ENCODE measurements at regions of chr2 and their contacts with region 1.

Region 1: GRCh38 chr2:216687646-216688045 is 7.7 kb downstream of the IGFBP5 start:
- DNase-seq: no peak
- H3K4me3 ChIP-seq: no peak overlapping the region
- H3K27ac ChIP-seq: no peak overlapping the region
- H3K4me1 ChIP-seq: peaks cover 12% of the 10 kb centered on the region
- H3K27me3 ChIP-seq: no peaks in the 10 kb centered on the region
- CTCF ChIP-seq: peak; percentile 65

Region 2: DNA sequence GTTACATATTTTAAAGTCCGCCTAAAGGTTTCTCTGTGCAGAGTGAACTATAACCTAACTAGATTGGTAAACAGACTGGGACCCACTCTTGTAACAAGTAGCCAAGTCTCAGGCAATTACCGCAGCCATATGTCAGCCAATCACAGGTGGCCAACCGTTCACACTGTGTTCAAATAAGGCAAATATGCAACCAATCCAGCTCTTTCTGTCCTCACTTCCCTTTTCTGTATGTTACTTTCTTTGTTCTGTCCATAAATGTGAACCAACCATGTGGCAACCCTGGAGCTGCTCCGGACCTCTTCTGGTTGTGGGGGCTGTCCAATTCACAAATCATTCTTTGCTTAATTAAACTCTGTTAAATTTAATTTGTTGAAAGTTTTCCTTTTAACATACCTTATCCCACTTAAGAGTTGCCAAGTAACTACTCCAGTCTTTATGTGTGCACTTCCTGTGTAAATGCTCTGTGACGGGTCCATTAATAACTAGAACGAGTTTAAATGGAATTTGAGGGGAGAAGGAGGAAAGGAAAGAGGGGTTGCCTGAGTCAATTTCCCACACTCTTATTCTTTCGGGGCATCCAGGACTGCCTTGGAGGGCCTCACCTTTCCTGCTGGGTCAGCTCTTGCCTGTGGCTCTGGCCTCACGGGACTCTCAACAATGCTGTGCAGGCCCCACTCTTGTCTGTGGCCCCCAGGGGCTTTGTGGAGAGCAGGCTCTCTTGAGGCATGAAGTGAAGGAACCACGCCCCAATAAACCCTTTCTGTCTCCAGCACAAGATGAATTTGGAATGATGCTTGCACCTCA is 195.7 kb before region 1 on chr2:
- CTCF ChIA-PET with region 1: no interaction called
- POLR2A ChIA-PET with region 1: interaction called, 15 read pairs
- intact Hi-C with region 1: no loop called
- DNase-seq: peak; percentile 68
- H3K4me3 ChIP-seq: no peak overlapping the region
- H3K27ac ChIP-seq: peak overlapping the region; percentile 40
- H3K4me1 ChIP-seq: peaks cover 27% of the 10 kb centered on the region
- H3K27me3 ChIP-seq: no peaks in the 10 kb centered on the region
- CTCF ChIP-seq: no peak

Measured in A673 (cell line).